Transverse colon (tissue), 4 donors: ENCODE measurements at regions of chr10 and their contacts with region 1.

Region 1: DNA sequence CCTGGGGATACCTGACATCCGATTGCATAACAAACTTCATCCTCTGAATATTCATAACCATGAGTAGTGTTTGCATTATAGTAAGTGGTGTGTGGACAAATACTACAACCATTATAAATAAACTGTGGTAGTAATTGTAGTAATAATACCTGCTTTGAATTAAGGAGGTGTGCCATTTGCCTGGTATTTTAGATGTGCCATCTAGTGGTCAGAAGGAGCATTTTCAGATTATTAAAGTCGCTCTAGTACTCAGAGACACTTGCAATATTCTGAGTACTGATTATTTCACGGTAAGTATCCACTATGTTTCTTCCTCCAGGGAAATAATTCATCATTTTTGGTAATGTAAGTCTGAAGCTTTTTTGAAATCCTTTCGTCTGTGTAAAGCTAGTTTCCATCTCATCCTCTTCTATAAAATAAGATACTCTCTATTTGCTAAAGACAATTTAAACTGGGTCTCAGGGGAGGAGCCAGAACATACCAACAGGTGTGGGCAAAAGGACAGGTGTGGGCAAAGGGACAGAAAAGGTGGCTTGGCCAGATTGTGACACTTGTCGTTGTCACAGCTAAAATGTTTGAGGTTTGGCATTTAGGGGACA is 115.3 kb upstream of the WDR11 start:
- DNase-seq: no peak
- H3K4me3 ChIP-seq: no peak overlapping the region
- H3K27ac ChIP-seq: no peak overlapping the region
- H3K4me1 ChIP-seq: no peaks in the 10 kb centered on the region
- H3K27me3 ChIP-seq: no peaks in the 10 kb centered on the region
- CTCF ChIP-seq: peak; percentile 53 to 65 (median 61)
- EP300 ChIP-seq: no peak
- POLR2A ChIP-seq: no peak

Region 2: GRCh38 chr10:119149723-119150122 is 1586.1 kb before region 1 on chr10:
- in situ Hi-C with region 1: no loop called
- intact Hi-C with region 1: no loop called
- DNase-seq: no peak
- H3K4me3 ChIP-seq: no peak overlapping the region
- H3K27ac ChIP-seq: no peak overlapping the region
- H3K4me1 ChIP-seq: no peaks in the 10 kb centered on the region
- H3K27me3 ChIP-seq: no peaks in the 10 kb centered on the region
- CTCF ChIP-seq: no peak
- EP300 ChIP-seq: no peak
- POLR2A ChIP-seq: no peak

Region 3: DNA sequence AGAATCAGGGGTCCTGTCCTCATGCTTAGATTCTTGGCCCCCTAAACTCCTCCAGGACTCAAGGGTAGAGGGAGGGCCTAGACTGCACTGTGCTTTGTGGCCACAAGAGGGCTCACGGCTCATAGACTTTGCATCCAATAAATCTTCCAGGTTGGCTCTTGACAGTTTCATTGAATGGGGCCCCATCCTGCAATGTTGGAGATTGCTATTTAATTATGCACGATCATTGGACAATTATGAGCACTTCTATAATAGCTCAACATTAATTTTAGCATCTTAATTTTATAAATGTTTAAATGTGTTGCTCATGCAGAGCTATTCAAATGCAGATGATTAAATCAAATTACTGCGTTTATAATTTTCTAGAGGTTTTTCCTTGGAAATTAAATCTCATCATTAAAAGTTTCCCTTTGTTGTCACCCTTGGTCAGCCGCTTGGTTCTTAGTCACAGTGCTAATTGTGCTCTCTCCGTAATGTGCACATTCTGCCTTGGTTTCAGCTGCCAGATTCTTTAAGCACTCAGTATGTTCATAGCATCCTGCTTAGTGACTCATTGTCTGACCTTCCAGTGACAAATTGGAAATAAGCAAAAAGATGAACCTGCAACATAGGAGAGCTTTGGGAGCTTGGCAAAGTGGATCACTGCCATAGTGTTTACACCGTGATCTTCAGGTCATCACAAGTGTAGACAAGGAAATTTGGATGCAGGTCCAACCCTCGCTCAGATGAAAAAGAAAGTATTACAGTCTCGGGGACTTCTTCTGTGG is 312.3 kb before region 1 on chr10:
- in situ Hi-C with region 1: loop called in 1 of 4 experiments (anchors 25 kb)
- intact Hi-C with region 1: no loop called
- DNase-seq: peak; percentile 38
- H3K4me3 ChIP-seq: no peak overlapping the region
- H3K27ac ChIP-seq: no peak overlapping the region
- H3K4me1 ChIP-seq: no peaks in the 10 kb centered on the region
- H3K27me3 ChIP-seq: no peaks in the 10 kb centered on the region
- CTCF ChIP-seq: peak; percentile 63 to 74 (median 72)
- EP300 ChIP-seq: no peak
- POLR2A ChIP-seq: no peak